IMR-90 (cell line): ENCODE measurements at regions of chr5 and their contacts with region 1.

Region 1: DNA sequence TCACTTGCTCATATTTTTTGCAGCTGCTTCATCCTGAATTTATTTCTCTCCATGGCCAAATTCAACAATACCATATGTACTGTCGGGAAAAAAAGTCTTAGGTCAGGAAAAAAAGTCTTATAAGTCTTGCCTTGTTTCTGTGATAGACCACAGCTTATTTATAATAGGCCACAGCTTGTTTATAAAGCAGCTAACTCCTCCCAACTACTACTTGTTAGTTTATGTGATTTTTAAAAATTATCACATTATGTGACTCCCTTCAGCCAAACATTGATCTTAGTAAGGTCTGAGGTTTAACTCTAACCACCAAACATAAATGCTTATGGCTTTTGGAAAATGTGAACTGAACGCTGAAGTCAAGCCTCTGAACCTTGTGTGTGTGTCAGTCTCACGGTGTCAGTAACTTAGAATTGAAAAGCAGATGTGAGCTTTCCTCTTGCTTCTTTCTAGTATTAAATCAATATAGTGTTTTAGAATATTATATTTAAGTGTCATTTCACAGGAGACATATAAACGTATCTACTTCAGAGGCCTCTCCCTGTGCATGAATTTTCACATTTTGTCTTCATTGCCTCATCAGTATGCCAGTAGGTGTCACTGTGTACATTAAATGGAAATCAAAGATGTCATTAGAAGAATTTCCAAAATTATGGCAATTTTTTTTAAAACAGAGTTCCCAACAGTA is 51.3 kb downstream of the SNX24 start:
- DNase-seq: peak; percentile 85
- ATAC-seq: peak; percentile 91
- H3K4me3 ChIP-seq: no peak overlapping the region
- H3K27ac ChIP-seq: no peak overlapping the region
- H3K4me1 ChIP-seq: peaks cover 3% of the 10 kb centered on the region; the same call in 1 of the 2 replicates
- H3K27me3 ChIP-seq: no peaks in the 10 kb centered on the region; the same call in 1 of the 2 replicates
- CTCF ChIP-seq: peak; percentile 61
- POLR2A ChIP-seq: no peak
- RAD21 ChIP-seq: peak; percentile 65

Region 2: GRCh38 chr5:123344816-123345426 is 448.2 kb after region 1 on chr5:
- CTCF ChIA-PET with region 1: no interaction called
- POLR2A ChIA-PET with region 1: no interaction called
- dilution Hi-C with region 1: no loop called
- in situ Hi-C with region 1: no loop called
- intact Hi-C with region 1: loop called (anchors 1 kb)
- DNase-seq: peak; percentile 52
- ATAC-seq: peak; percentile 79
- H3K4me3 ChIP-seq: no peak overlapping the region
- H3K27ac ChIP-seq: no peak overlapping the region
- H3K4me1 ChIP-seq: no peaks in the 10 kb centered on the region
- H3K27me3 ChIP-seq: no peaks in the 10 kb centered on the region
- CTCF ChIP-seq: peak; percentile 83
- POLR2A ChIP-seq: no peak
- RAD21 ChIP-seq: peak; percentile 71

Region 3: GRCh38 chr5:123371575-123372179 is 474.9 kb after region 1 on chr5:
- CTCF ChIA-PET with region 1: no interaction called
- POLR2A ChIA-PET with region 1: no interaction called
- dilution Hi-C with region 1: no loop called
- in situ Hi-C with region 1: loop called (anchors 10 kb)
- intact Hi-C with region 1: loop called (anchors 2 kb)
- DNase-seq: peak; percentile 7
- ATAC-seq: no peak
- H3K4me3 ChIP-seq: no peak overlapping the region
- H3K27ac ChIP-seq: no peak overlapping the region
- H3K4me1 ChIP-seq: no peaks in the 10 kb centered on the region
- H3K27me3 ChIP-seq: no peaks in the 10 kb centered on the region
- CTCF ChIP-seq: peak; percentile 49
- POLR2A ChIP-seq: no peak
- RAD21 ChIP-seq: peak; percentile 40